Activated naive CD8-positive, alpha-beta T cell treated with anti-CD3 and anti-CD28 coated beads, Interleukin-2, amount 10 ng/mL, durations not matched to agents 7 days and 5 days (primary cell): ENCODE measurements at regions of chr19 and their contacts with region 1.

Region 1: DNA sequence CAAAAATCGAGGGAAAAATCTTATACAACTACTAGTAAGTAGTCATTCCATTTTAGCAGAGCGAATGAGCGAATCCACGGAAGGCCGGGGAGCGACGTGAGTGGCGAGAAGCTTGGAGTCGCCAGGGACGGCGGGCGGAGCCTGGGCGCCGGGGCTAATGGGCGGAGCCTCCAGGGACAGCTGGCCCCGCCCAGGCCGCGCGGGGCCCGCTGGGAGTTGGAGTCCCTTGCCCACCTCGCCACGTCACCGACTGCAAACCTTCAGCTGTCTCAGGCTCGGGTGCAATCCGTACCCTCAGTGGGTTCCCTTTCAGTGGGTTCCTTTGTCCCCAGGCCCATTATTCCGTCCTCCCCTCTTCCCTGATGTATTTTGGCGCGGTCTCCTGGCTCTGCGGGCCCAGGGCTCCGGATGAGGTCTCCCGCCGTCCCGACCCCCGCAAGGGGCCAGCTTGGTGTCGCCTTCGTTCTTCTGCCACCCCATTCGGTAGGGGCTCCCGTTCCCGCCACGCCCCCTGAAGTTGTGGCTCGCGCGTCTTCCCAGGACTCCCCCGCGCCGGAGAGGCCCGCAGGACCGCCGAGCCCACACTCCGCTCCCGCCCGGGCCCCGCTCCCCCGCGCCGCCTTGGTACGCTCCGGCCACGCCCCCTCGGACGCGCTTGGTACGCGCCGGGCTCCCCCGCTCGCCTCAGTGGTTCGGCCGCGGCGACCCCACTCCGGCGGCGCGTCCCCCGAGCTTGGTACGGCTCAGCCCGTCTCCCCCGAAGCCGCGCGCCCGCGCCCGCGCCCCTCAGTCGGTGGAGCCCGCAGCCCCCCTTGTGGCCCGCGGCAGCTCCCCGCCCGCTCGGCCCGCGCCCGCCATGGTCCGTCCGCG is at the start of gene PTOV1:
- DNase-seq: peak; percentile 98
- ATAC-seq: peak; percentile 82
- H3K4me3 Mint-ChIP-seq: peak within 1 kb of the TSS; percentile 87
- H3K27ac Mint-ChIP-seq: peak within 1 kb of the TSS; percentile 94
- H3K4me1 Mint-ChIP-seq: peaks cover 34% of the 10 kb centered on the region
- H3K27me3 Mint-ChIP-seq: peaks cover 2% of the 10 kb centered on the region
- total RNA-seq, gene PTOV1: 99.7 to 102 TPM

Region 2: DNA sequence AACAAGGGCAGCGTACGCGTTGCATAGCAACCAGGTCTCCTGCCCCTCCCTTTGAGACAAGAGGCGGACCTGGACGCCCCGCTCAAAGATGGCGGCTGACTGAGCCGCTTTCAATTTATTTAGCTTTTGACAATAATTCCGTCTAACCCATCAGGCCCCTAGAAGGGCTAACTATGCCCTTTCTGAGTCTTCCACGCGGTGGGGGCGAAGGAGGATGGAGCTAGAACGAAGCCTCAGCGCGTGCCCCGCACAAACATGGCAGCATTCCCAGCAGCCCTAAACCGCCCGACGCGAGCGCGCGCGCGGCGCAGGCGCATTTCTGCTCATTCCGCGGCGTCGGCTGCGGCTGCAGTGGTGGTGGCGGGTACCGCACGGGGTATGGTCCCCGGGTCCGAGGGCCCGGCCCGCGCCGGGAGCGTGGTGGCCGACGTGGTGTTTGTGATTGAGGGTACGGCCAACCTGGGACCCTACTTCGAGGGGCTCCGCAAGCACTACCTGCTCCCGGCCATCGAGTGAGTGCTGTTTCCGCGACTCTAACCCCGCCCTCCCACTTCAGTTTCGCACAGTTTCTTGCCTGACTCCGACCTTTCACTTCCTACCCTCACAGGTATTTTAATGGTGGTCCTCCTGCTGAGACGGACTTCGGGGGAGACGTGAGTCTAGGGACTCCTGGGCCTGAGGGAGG is 32.6 kb before region 1 on chr19 and contains the start of gene MED25:
- POLR2A ChIA-PET with region 1: interaction called, 23 read pairs
- DNase-seq: peak; percentile 95
- ATAC-seq: peak; percentile 73
- H3K4me3 Mint-ChIP-seq: peak within 1 kb of the TSS; percentile 97
- H3K27ac Mint-ChIP-seq: peak within 1 kb of the TSS; percentile 99
- H3K4me1 Mint-ChIP-seq: peaks cover 22% of the 10 kb centered on the region
- H3K27me3 Mint-ChIP-seq: no peaks in the 10 kb centered on the region
- total RNA-seq, gene MED25: 60.4 to 66.3 TPM

Region 3: DNA sequence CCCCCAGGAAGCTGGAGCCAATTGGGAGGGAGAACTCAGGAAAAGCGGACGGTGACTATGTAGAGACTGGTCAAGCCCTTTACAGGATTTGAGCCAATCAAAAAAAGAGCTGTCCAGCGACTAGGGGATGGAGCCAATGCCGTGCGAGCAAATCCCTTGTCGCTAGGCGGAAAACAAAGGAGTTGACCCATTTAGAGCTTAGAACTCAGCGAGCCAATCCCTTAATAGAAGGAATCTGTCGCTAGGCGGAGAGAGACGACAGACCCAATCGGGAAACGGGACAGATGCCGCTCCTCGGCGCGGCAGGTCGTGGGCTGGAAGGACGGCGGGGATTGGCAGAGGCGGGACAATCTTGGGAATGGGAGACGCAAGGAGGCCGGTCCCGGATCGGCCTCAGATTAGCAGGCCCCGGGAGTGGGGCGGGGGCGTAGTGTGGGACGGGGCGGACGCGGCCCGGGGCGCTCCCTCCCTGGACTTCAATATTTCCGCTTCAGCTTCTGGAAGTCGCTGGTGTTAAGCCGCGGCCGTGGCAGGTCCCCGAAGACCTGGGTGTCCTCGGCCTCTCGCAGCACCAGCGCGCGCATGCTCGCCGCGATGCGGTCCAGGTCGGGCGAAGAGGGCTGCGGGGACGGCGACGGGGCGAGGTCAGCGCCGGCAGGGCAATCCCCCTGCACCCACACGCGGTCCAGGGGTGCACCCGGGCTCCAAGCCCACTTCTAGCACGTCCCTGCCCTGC is 18.9 kb after region 1 on chr19:
- POLR2A ChIA-PET with region 1: interaction called, 22 read pairs
- DNase-seq: peak; percentile 90
- ATAC-seq: peak; percentile 85
- H3K4me3 Mint-ChIP-seq: no peak overlapping the region
- H3K27ac Mint-ChIP-seq: peak overlapping the region; percentile 94
- H3K4me1 Mint-ChIP-seq: peaks cover 31% of the 10 kb centered on the region
- H3K27me3 Mint-ChIP-seq: no peaks in the 10 kb centered on the region

Region 4: GRCh38 chr19:50046649-50047503 is 196.2 kb after region 1 on chr19:
- POLR2A ChIA-PET with region 1: no interaction called
- DNase-seq: peak; percentile 43
- ATAC-seq: no peak
- H3K4me3 Mint-ChIP-seq: no peak overlapping the region
- H3K27ac Mint-ChIP-seq: no peak overlapping the region
- H3K4me1 Mint-ChIP-seq: peaks cover 8% of the 10 kb centered on the region
- H3K27me3 Mint-ChIP-seq: peaks cover 14% of the 10 kb centered on the region